ENCODE measurements at regions of chr1 and their contacts with region 1.

Region 1: GRCh38 chr1:228082135-228082891 is at the start of gene ARF1:
- DNase-seq: peak; percentile 93
- H3K4me3 ChIP-seq: peak within 1 kb of the TSS; percentile 83 to 99 (median 95)
- H3K27ac ChIP-seq: peak within 1 kb of the TSS; percentile 93 to 99 (median 99)
- H3K4me1 ChIP-seq: peaks cover 43 to 49% (median 45%) of the 10 kb centered on the region in 4 donors
- H3K27me3 ChIP-seq: no peaks in the 10 kb centered on the region
- CTCF ChIP-seq: peak in 3 of 5 experiments; percentile 9 to 37 (median 16)
- EP300 ChIP-seq: no peak
- POLR2A ChIP-seq: peak; percentile 82
- total RNA-seq, gene ARF1: 303 to 452 (median 375) TPM

Region 2: GRCh38 chr1:228101994-228102790 is 19.9 kb after region 1 on chr1:
- in situ Hi-C with region 1: no loop called
- intact Hi-C with region 1: loop called (anchors 1 kb)
- DNase-seq: peak; percentile 71
- H3K4me3 ChIP-seq: peak overlapping the region; percentile 77 to 84 (median 80)
- H3K27ac ChIP-seq: peak overlapping the region; percentile 93 to 98 (median 95)
- H3K4me1 ChIP-seq: peaks cover 10 to 22% (median 20%) of the 10 kb centered on the region in 4 donors
- H3K27me3 ChIP-seq: no peaks in the 10 kb centered on the region
- CTCF ChIP-seq: peak in 2 of 5 experiments; percentile 19 to 23
- EP300 ChIP-seq: no peak
- POLR2A ChIP-seq: no peak

Region 3: DNA sequence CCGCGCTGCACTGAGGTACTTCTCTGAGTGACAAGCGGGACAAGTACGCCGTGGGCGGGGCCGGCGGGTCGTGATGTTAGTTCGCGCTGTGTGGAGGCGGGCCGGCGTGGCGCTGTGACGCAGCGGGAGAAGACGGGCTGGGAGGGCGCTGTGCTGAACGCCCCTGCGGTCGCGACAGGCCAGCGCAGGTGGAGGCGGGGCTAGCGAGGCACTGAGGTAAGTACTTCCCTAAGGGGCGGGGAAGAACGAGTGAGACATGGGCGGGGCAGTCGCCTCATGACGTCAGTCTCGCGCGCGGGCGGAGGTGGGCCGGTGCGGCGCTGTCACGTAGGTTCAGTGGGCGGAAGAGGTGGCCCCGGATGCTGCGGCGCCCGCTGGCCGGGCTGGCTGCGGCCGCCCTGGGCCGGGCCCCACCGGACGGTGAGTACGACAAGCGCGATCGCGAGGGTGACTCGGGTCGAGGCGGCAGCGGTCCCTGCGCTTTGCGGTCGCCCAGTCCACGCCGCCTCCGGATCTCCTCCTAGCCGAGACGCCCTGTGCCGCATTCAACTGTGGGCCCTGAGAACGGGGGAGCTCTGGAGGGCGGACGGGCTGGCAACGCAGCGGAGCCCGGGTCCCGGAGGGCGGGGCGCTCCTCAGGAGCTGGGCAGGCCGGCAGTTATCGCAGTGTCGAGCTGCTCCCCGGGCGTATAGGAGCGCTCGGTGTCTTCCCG is 57.8 kb after region 1 on chr1 and contains the start of gene GUK1:
- in situ Hi-C with region 1: no loop called
- intact Hi-C with region 1: loop called (anchors 2 kb)
- DNase-seq: peak; percentile 100
- H3K4me3 ChIP-seq: peak within 1 kb of the TSS; percentile 68 to 98 (median 86)
- H3K27ac ChIP-seq: peak within 1 kb of the TSS; percentile 97 to 100 (median 98)
- H3K4me1 ChIP-seq: peaks cover 18 to 38% (median 25%) of the 10 kb centered on the region in 4 donors
- H3K27me3 ChIP-seq: no peaks in the 10 kb centered on the region
- CTCF ChIP-seq: peak in 3 of 5 experiments; percentile 16 to 71 (median 17)
- EP300 ChIP-seq: peak; percentile 72
- POLR2A ChIP-seq: peak; percentile 98
- total RNA-seq, gene GUK1: 183 to 573 (median 382) TPM